Calu3 (cell line): ENCODE measurements at regions of chr7 and their contacts with region 1.

Region 1: GRCh38 chr7:6272481-6273323 is at the start of gene CYTH3:
- DNase-seq: peak; percentile 97
- H3K4me3 Mint-ChIP-seq: peak within 1 kb of the TSS; percentile 99
- H3K27ac Mint-ChIP-seq: peak within 1 kb of the TSS; percentile 89
- H3K4me1 Mint-ChIP-seq: peaks cover 70% of the 10 kb centered on the region
- H3K27me3 Mint-ChIP-seq: no peaks in the 10 kb centered on the region
- CTCF ChIP-seq: no peak
- total RNA-seq, gene CYTH3: 47.2 and 73.4 TPM in 2 replicates

Region 2: GRCh38 chr7:6032641-6033040 is 240.1 kb before region 1 on chr7:
- CTCF ChIA-PET with region 1: no interaction called
- intact Hi-C with region 1: no loop called
- DNase-seq: no peak
- H3K4me3 Mint-ChIP-seq: no peak overlapping the region
- H3K27ac Mint-ChIP-seq: no peak overlapping the region
- H3K4me1 Mint-ChIP-seq: no peaks in the 10 kb centered on the region
- H3K27me3 Mint-ChIP-seq: no peaks in the 10 kb centered on the region
- CTCF ChIP-seq: no peak

Region 3: DNA sequence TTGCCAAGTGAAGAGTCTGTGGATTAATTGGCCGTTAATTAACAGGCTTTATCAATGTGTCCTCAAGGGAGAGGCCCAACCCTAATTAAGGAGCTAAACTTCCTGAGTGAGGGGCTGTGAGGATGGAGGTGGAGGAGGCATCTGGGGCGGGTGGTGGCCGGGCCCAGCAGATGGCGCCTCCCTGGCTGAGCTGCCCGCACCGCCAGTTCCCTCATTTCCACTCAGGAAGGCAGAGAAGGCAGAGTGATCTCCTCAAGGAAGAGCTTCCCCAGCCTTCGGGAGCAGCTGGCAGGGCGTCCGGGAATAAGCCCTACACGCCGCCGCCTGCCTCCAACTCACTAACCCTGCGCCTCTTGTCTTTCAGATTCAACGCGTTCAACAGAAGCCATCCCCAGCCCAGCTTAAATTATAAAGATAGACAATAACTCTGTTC is 112.5 kb before region 1 on chr7:
- CTCF ChIA-PET with region 1: no interaction called
- intact Hi-C with region 1: loop called (anchors 5 kb)
- DNase-seq: peak; percentile 58
- H3K4me3 Mint-ChIP-seq: no peak overlapping the region
- H3K27ac Mint-ChIP-seq: no peak overlapping the region
- H3K4me1 Mint-ChIP-seq: no peaks in the 10 kb centered on the region
- H3K27me3 Mint-ChIP-seq: no peaks in the 10 kb centered on the region
- CTCF ChIP-seq: no peak

Region 4: DNA sequence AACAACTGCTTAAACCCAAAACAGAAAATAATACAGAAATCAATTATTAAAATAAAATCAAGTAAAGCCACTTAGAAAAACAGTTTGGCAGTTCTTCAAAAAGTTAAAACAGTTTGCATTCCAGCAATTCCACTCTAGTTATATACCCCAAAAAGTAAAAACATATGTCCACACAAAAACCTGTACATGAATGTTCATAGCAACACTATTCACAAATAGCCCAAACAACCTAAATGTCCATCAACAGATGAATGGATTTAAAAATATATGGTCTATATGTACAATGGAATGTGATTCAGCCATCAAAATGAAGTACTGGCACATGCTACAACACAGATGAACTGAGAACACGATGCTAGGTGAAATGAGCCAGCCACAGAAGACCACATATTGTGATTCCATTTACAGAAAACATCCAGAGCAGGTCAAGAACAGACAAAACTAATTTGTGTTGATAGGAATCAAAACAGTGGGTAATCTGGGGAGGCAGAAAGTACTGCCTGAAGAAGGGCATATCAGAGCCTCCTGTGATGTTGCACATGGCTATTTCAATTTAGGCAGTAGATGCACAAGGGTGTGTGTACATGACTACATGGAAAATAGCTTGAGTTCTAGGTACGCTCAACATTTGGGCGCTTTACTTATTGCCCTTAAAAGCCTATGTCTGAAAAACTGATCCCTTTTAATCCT is 66.6 kb before region 1 on chr7:
- CTCF ChIA-PET with region 1: no interaction called
- intact Hi-C with region 1: loop called (anchors 5 kb)
- DNase-seq: no peak
- H3K4me3 Mint-ChIP-seq: no peak overlapping the region
- H3K27ac Mint-ChIP-seq: no peak overlapping the region
- H3K4me1 Mint-ChIP-seq: peaks cover 27% of the 10 kb centered on the region
- H3K27me3 Mint-ChIP-seq: no peaks in the 10 kb centered on the region
- CTCF ChIP-seq: no peak

Region 5: DNA sequence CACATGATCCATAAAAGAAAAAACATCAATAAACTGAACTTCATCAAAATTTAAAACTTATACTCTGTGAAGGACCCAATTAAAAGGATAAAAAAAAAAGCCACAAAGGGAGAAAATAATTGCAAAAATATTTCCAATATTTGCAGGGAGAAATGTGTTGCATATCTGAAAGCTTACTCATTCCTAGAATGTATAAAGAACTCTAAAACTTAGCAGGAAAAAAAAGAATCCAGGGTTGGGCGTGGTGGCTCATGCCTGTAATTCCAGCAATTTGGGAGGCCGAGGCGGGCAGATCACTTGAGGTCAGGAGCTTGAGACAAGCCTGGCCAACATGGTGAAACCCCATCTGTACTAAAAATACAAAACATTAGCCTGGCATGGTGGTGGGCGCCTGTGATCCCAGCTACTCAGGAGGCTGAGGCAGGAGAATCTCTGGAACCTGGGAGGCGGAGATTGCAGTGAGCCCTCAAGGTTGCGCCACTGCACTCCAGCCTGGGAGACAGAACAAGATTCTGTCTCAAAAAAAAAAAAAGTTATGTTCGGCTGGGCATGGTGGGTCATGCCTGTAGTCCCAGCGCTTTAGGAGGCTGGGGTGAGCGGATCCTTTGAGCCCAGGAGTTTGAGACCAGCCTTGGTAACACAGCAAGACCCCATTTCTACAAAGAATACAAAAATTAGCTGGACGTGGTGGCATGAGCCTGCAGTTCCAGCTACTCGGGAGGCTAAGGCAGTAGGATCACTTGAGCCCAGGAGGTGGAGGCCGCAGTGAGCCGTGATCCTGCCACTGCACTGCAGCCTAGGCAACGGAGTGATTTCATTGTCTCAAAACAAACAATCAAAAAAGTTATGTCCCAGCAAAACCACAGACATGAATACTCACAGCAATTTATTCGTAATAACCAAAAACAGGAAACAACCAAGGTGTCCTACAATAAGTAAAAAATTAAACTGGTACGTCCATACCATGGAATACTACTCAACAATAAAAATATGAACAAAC is 11.0 kb after region 1 on chr7:
- CTCF ChIA-PET with region 1: interaction called, 12 read pairs
- intact Hi-C with region 1: no loop called
- DNase-seq: peak; percentile 84
- H3K4me3 Mint-ChIP-seq: peak overlapping the region; percentile 30
- H3K27ac Mint-ChIP-seq: peak overlapping the region; percentile 80
- H3K4me1 Mint-ChIP-seq: peaks cover 26% of the 10 kb centered on the region
- H3K27me3 Mint-ChIP-seq: no peaks in the 10 kb centered on the region
- CTCF ChIP-seq: no peak

Region 6: GRCh38 chr7:6323967-6324701 is 51.4 kb after region 1 on chr7:
- CTCF ChIA-PET with region 1: interaction called, 3 read pairs
- intact Hi-C with region 1: loop called (anchors 1 kb)
- DNase-seq: no peak
- H3K4me3 Mint-ChIP-seq: no peak overlapping the region
- H3K27ac Mint-ChIP-seq: no peak overlapping the region
- H3K4me1 Mint-ChIP-seq: peaks cover 8% of the 10 kb centered on the region
- H3K27me3 Mint-ChIP-seq: no peaks in the 10 kb centered on the region
- CTCF ChIP-seq: no peak

Region 7: GRCh38 chr7:6392706-6393666 is 120.3 kb after region 1 on chr7:
- CTCF ChIA-PET with region 1: no interaction called
- intact Hi-C with region 1: no loop called
- DNase-seq: peak; percentile 96
- H3K4me3 Mint-ChIP-seq: peak overlapping the region; percentile 62
- H3K27ac Mint-ChIP-seq: peak overlapping the region; percentile 89
- H3K4me1 Mint-ChIP-seq: peaks cover 78% of the 10 kb centered on the region
- H3K27me3 Mint-ChIP-seq: no peaks in the 10 kb centered on the region
- CTCF ChIP-seq: no peak